ENCODE measurements at regions of chr5 and their contacts with region 1.

Region 1: DNA sequence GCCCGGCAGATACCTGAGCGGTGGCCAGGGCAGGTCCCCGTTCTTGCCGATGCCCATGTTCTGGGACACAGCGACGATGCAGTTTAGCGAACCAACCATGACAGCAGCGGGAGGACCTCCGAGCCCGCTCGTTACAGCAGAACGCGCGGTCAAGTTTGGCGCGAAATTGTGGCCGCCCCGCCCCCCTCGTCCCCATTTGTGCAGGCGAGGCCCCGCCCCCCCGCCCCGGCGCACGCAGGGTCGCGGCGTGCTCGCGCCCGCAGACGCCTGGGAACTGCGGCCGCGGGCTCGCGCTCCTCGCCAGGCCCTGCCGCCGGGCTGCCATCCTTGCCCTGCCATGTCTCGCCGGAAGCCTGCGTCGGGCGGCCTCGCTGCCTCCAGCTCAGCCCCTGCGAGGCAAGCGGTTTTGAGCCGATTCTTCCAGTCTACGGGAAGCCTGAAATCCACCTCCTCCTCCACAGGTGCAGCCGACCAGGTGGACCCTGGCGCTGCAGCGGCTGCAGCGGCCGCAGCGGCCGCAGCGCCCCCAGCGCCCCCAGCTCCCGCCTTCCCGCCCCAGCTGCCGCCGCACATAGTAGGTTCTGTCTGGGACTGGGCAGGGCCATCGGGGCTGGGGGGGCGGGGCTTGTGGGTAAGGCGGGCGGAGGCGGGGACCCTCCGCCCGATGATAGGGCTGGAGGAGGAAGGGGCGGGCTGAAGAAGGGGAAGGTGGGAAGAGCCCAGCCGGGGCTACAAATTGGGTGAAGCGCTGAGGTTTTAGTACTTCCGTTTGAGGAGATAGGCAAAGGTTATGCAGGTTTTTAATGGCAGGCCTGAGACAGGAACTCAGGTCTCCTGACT is at the starts of genes DHFR and MSH3:
- DNase-seq: peak; percentile 79
- ATAC-seq: peak; percentile 73
- H3K4me3 Mint-ChIP-seq: peak within 1 kb of the TSS; percentile 97
- H3K27ac Mint-ChIP-seq: peak within 1 kb of the TSS; percentile 99
- H3K4me1 Mint-ChIP-seq: peaks cover 26% of the 10 kb centered on the region
- H3K27me3 Mint-ChIP-seq: no peaks in the 10 kb centered on the region
- CTCF ChIP-seq: no peak
- total RNA-seq, gene DHFR: 11.1 and 12.7 TPM in 2 replicates
- total RNA-seq, gene MSH3: 22.9 and 24.0 TPM in 2 replicates

Region 2: GRCh38 chr5:79235634-79236363 is 1418.8 kb before region 1 on chr5 and contains the start of gene JMY:
- CTCF ChIA-PET with region 1: no interaction called
- POLR2A ChIA-PET with region 1: no interaction called
- intact Hi-C with region 1: loop called (anchors 10 kb)
- DNase-seq: peak; percentile 68
- ATAC-seq: peak; percentile 79
- H3K4me3 Mint-ChIP-seq: peak within 1 kb of the TSS; percentile 91
- H3K27ac Mint-ChIP-seq: peak within 1 kb of the TSS; percentile 94
- H3K4me1 Mint-ChIP-seq: peaks cover 34% of the 10 kb centered on the region
- H3K27me3 Mint-ChIP-seq: no peaks in the 10 kb centered on the region
- CTCF ChIP-seq: no peak
- total RNA-seq, gene JMY: 6.4 and 6.9 TPM in 2 replicates

Region 3: GRCh38 chr5:79990598-79991507 is 663.8 kb before region 1 on chr5 and contains the start of gene MTX3:
- CTCF ChIA-PET with region 1: no interaction called
- POLR2A ChIA-PET with region 1: no interaction called
- intact Hi-C with region 1: loop called (anchors 2 kb)
- DNase-seq: peak; percentile 74
- ATAC-seq: peak; percentile 95
- H3K4me3 Mint-ChIP-seq: peak within 1 kb of the TSS; percentile 88
- H3K27ac Mint-ChIP-seq: peak within 1 kb of the TSS; percentile 84
- H3K4me1 Mint-ChIP-seq: peaks cover 23% of the 10 kb centered on the region
- H3K27me3 Mint-ChIP-seq: peaks cover 2% of the 10 kb centered on the region
- CTCF ChIP-seq: no peak
- total RNA-seq, gene MTX3: 20.0 and 21.4 TPM in 2 replicates

Region 4: GRCh38 chr5:80487829-80488721 is 166.5 kb before region 1 on chr5 and contains the start of gene FAM151B:
- CTCF ChIA-PET with region 1: no interaction called
- POLR2A ChIA-PET with region 1: no interaction called
- intact Hi-C with region 1: loop called (anchors 5 kb)
- DNase-seq: peak; percentile 60
- ATAC-seq: peak; percentile 87
- H3K4me3 Mint-ChIP-seq: peak within 1 kb of the TSS; percentile 78
- H3K27ac Mint-ChIP-seq: no peak within 1 kb of the TSS
- H3K4me1 Mint-ChIP-seq: peaks cover 19% of the 10 kb centered on the region
- H3K27me3 Mint-ChIP-seq: peaks cover 37% of the 10 kb centered on the region
- CTCF ChIP-seq: no peak
- total RNA-seq, gene FAM151B: 0.47 TPM in 1 of 2 replicates, not detected in the other

Region 5: DNA sequence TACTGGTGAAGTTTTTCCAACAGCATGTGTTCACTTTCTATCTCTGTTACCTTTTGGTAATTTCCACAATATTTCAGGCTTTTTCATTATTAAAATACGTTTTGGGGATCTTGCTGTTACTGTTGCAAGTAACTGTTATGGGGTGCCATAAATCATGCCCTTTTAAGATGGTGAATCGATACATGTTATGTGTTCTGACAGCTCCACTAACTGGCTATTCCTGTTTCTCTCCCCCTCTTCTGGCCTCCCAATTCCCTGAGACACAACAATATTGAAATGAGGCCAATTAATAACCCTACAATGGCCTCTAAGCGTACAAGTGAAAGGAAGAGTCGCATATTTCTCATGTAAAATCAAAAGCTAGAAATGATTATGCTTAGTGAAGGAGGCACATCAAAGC is 13.3 kb before region 1 on chr5:
- CTCF ChIA-PET with region 1: no interaction called
- POLR2A ChIA-PET with region 1: no interaction called
- intact Hi-C with region 1: no loop called
- DNase-seq: no peak
- ATAC-seq: no peak
- H3K4me3 Mint-ChIP-seq: no peak overlapping the region
- H3K27ac Mint-ChIP-seq: no peak overlapping the region
- H3K4me1 Mint-ChIP-seq: no peaks in the 10 kb centered on the region
- H3K27me3 Mint-ChIP-seq: no peaks in the 10 kb centered on the region
- CTCF ChIP-seq: no peak

Region 6: GRCh38 chr5:80672140-80672736 is 17.6 kb after region 1 on chr5:
- CTCF ChIA-PET with region 1: interaction called, 5 read pairs
- POLR2A ChIA-PET with region 1: interaction called, 15 read pairs
- intact Hi-C with region 1: loop called (anchors 1 kb)
- DNase-seq: no peak
- ATAC-seq: no peak
- H3K4me3 Mint-ChIP-seq: no peak overlapping the region
- H3K27ac Mint-ChIP-seq: no peak overlapping the region
- H3K4me1 Mint-ChIP-seq: peaks cover 19% of the 10 kb centered on the region
- H3K27me3 Mint-ChIP-seq: no peaks in the 10 kb centered on the region
- CTCF ChIP-seq: peak; percentile 61

Region 7: GRCh38 chr5:80686757-80687156 is 32.1 kb after region 1 on chr5:
- CTCF ChIA-PET with region 1: no interaction called
- POLR2A ChIA-PET with region 1: no interaction called
- intact Hi-C with region 1: no loop called
- DNase-seq: no peak
- ATAC-seq: no peak
- H3K4me3 Mint-ChIP-seq: no peak overlapping the region
- H3K27ac Mint-ChIP-seq: no peak overlapping the region
- H3K4me1 Mint-ChIP-seq: peaks cover 4% of the 10 kb centered on the region
- H3K27me3 Mint-ChIP-seq: no peaks in the 10 kb centered on the region
- CTCF ChIP-seq: no peak

Region 8: GRCh38 chr5:80809451-80809850 is 154.8 kb after region 1 on chr5:
- CTCF ChIA-PET with region 1: no interaction called
- POLR2A ChIA-PET with region 1: no interaction called
- intact Hi-C with region 1: no loop called
- DNase-seq: no peak
- ATAC-seq: no peak
- H3K4me3 Mint-ChIP-seq: no peak overlapping the region
- H3K27ac Mint-ChIP-seq: no peak overlapping the region
- H3K4me1 Mint-ChIP-seq: no peaks in the 10 kb centered on the region
- H3K27me3 Mint-ChIP-seq: no peaks in the 10 kb centered on the region
- CTCF ChIP-seq: no peak

Region 9: DNA sequence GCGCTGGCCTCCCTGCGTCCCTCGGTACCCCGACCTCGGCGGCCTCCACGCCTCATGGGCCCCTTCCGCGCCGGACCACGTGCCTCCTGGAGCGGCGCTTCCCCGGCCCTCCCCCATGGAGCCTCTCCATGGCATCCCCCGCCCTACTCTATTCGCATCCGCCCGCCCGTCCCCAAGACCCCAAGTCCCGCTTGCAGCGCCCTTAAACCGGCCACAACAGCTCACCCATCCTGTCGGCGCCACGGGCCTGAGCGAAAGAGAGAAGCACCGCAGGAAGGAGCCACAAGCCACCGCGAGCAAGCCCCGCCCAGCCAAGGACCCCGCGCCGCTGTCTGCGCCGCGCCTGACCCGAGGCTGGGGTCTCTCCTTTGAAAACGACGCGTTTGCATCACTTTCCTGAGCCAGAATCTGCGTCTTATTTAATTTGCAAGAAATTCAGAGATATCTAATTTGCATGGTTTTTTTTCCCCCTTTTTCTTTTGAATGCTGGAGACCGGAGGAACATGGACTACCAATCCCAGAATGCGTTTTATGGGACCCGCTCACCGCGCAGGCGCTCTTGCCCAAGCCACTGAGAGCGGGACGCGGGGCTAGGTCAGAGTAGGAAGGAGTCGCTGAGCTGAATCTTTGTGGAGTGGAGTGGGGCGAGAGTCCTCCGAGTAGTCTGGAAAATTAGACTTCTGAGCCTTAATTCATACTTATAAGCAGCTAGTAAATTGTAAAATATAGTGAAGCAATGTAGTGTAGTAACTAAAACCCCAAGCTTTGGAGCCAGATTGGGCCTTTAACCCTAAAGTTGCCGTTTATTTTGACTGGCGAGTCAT is 1623.7 kb after region 1 on chr5 and contains the start of gene RPS23:
- CTCF ChIA-PET with region 1: no interaction called
- POLR2A ChIA-PET with region 1: no interaction called
- intact Hi-C with region 1: loop called (anchors 1 kb)
- DNase-seq: peak; percentile 79
- ATAC-seq: peak; percentile 92
- H3K4me3 Mint-ChIP-seq: peak within 1 kb of the TSS; percentile 96
- H3K27ac Mint-ChIP-seq: peak within 1 kb of the TSS; percentile 99
- H3K4me1 Mint-ChIP-seq: peaks cover 44% of the 10 kb centered on the region
- H3K27me3 Mint-ChIP-seq: no peaks in the 10 kb centered on the region
- CTCF ChIP-seq: no peak
- total RNA-seq, gene RPS23: 4,125 and 4,753 TPM in 2 replicates